HepG2 (cell line): ENCODE measurements at regions of chr13 and their contacts with region 1.

Region 1: DNA sequence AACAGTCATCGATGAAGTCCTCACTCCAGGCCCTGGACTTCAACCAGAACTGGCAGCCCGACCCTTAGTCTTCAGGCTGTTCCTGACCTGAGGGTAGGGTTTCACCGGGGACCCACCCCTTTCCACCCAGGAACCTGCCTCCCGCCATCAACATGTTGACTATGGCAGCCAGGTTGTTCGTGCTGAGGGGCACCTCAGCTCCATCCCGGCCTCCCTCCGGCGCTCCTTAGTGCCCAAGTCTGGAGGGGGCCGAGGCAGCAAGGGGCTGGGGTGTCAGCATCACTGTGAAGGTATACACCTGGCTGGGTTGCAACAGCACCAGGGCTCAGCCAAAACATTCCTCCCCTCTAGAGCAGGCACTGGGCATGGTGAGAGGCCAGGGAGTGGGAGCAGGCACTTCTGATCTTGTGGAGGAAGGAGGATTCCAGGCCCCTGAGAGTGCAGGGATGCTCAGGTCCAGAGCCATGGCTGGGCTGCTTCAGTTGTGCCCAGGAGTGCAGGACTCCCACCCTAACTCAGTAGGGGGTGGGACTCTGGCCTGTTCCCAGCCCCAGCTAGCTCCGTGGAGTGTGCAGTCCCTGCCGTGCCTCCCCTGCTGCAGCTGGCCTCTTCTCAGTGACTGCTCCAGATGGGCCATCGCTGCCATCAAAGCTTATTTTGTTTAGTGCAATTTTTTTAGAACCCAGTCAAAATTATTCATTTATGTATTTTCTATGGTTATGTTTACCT is 1445.9 kb downstream of the PCDH9 start:
- DNase-seq: no peak
- ATAC-seq: no peak
- H3K4me3 ChIP-seq: no peak overlapping the region
- H3K27ac ChIP-seq: no peak overlapping the region
- H3K4me1 ChIP-seq: no peaks in the 10 kb centered on the region
- H3K27me3 ChIP-seq: no peaks in the 10 kb centered on the region
- CTCF ChIP-seq: no peak
- EP300 ChIP-seq: no peak
- POLR2A ChIP-seq: no peak
- RAD21 ChIP-seq: no peak

Region 2: GRCh38 chr13:64688893-64689677 is 1095.2 kb before region 1 on chr13:
- CTCF ChIA-PET with region 1: no interaction called
- POLR2A ChIA-PET with region 1: no interaction called
- in situ Hi-C with region 1: no loop called
- intact Hi-C with region 1: no loop called
- DNase-seq: no peak
- ATAC-seq: no peak
- H3K4me3 ChIP-seq: no peak overlapping the region
- H3K27ac ChIP-seq: no peak overlapping the region
- H3K4me1 ChIP-seq: no peaks in the 10 kb centered on the region
- H3K27me3 ChIP-seq: no peaks in the 10 kb centered on the region
- CTCF ChIP-seq: no peak
- EP300 ChIP-seq: no peak
- POLR2A ChIP-seq: no peak
- RAD21 ChIP-seq: no peak

Region 3: GRCh38 chr13:65719831-65720230 is 64.4 kb before region 1 on chr13:
- CTCF ChIA-PET with region 1: no interaction called
- POLR2A ChIA-PET with region 1: no interaction called
- in situ Hi-C with region 1: no loop called
- intact Hi-C with region 1: loop called (anchors 2 kb)
- DNase-seq: no peak
- ATAC-seq: no peak
- H3K4me3 ChIP-seq: no peak overlapping the region
- H3K27ac ChIP-seq: no peak overlapping the region
- H3K4me1 ChIP-seq: no peaks in the 10 kb centered on the region
- H3K27me3 ChIP-seq: no peaks in the 10 kb centered on the region
- CTCF ChIP-seq: no peak
- EP300 ChIP-seq: no peak
- POLR2A ChIP-seq: no peak
- RAD21 ChIP-seq: no peak